Transverse colon (tissue), 4 donors: ENCODE measurements at regions of chr3 and their contacts with region 1.

Region 1: DNA sequence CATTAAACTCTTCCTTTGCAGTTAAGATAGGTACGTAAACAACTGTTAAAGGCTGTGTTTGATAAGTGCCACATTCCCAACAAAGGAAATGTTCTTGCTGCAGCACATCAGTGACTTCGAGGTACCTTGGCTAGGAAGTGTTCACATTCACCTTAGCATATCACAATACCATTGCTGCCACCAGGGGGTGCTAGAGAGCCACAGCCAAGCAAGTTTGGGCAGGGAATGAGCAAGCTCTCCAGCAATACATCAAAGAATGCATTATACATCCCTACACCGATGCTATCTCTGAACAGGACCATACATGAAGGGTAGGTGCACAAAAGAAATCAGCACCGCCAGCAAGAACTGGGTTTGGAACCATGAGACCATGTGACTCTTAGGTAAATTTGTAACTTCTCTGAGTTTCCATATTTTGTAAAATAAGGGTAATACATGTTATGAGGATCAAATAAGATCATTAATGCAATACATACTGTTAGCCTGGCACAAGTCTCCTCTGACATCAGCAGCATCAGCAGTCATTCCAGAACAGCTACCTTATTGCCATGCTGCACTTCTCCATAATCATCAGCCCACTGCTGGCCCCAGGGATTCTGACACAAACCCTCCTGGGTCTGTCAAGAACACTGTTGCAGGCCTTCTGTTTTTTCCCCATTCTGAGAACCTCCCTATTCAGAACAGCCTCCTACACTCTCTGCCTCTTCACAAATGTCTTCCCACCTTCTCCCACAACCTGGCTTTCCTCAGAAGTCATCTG is 37.6 kb downstream of the RYK start:
- DNase-seq: peak; percentile 87
- H3K4me3 ChIP-seq: no peak overlapping the region
- H3K27ac ChIP-seq: no peak overlapping the region
- H3K4me1 ChIP-seq: peaks cover 0 to 3% (median 0%) of the 10 kb centered on the region in 4 donors
- H3K27me3 ChIP-seq: no peaks in the 10 kb centered on the region
- CTCF ChIP-seq: peak; percentile 91 to 99 (median 98)
- EP300 ChIP-seq: no peak
- POLR2A ChIP-seq: no peak

Region 2: GRCh38 chr3:133610031-133610430 is 603.1 kb before region 1 on chr3:
- in situ Hi-C with region 1: no loop called
- intact Hi-C with region 1: no loop called
- DNase-seq: no peak
- H3K4me3 ChIP-seq: no peak overlapping the region
- H3K27ac ChIP-seq: no peak overlapping the region
- H3K4me1 ChIP-seq: no peaks in the 10 kb centered on the region
- H3K27me3 ChIP-seq: no peaks in the 10 kb centered on the region
- CTCF ChIP-seq: no peak
- EP300 ChIP-seq: no peak
- POLR2A ChIP-seq: no peak

Region 3: GRCh38 chr3:134056991-134057832 is 155.9 kb before region 1 on chr3:
- in situ Hi-C with region 1: no loop called
- intact Hi-C with region 1: no loop called
- DNase-seq: no peak
- H3K4me3 ChIP-seq: peak overlapping the region in 1 of 4 donors; percentile 3
- H3K27ac ChIP-seq: peak overlapping the region in 3 of 4 donors; percentile 41 to 72 (median 45)
- H3K4me1 ChIP-seq: peaks cover 0 to 43% (median 14%) of the 10 kb centered on the region in 4 donors
- H3K27me3 ChIP-seq: no peaks in the 10 kb centered on the region
- CTCF ChIP-seq: no peak
- EP300 ChIP-seq: no peak
- POLR2A ChIP-seq: peak; percentile 62

Region 4: GRCh38 chr3:134299185-134299887 is 86.2 kb after region 1 on chr3:
- in situ Hi-C with region 1: loop called in 2 of 4 experiments (anchors 10 kb)
- intact Hi-C with region 1: loop called (anchors 2 kb)
- DNase-seq: no peak
- H3K4me3 ChIP-seq: no peak overlapping the region
- H3K27ac ChIP-seq: peak overlapping the region in 1 of 4 donors; percentile 2
- H3K4me1 ChIP-seq: peaks cover 0 to 5% (median 0%) of the 10 kb centered on the region in 4 donors
- H3K27me3 ChIP-seq: no peaks in the 10 kb centered on the region
- CTCF ChIP-seq: peak in 4 of 5 experiments; percentile 22 to 44 (median 34)
- EP300 ChIP-seq: no peak
- POLR2A ChIP-seq: no peak

Region 5: GRCh38 chr3:134388788-134389485 is 175.9 kb after region 1 on chr3:
- in situ Hi-C with region 1: no loop called
- intact Hi-C with region 1: loop called (anchors 5 kb)
- DNase-seq: no peak
- H3K4me3 ChIP-seq: no peak overlapping the region
- H3K27ac ChIP-seq: no peak overlapping the region
- H3K4me1 ChIP-seq: peaks cover 0 to 8% (median 0%) of the 10 kb centered on the region in 4 donors
- H3K27me3 ChIP-seq: no peaks in the 10 kb centered on the region
- CTCF ChIP-seq: no peak
- EP300 ChIP-seq: no peak
- POLR2A ChIP-seq: no peak

Region 6: GRCh38 chr3:134473868-134474546 is 260.9 kb after region 1 on chr3:
- in situ Hi-C with region 1: loop called (anchors 5 to 25 kb)
- intact Hi-C with region 1: loop called (anchors 5 kb)
- DNase-seq: peak; percentile 77
- H3K4me3 ChIP-seq: no peak overlapping the region
- H3K27ac ChIP-seq: no peak overlapping the region
- H3K4me1 ChIP-seq: peaks cover 0 to 3% (median 0%) of the 10 kb centered on the region in 4 donors
- H3K27me3 ChIP-seq: no peaks in the 10 kb centered on the region
- CTCF ChIP-seq: peak; percentile 80 to 88 (median 82)
- EP300 ChIP-seq: no peak
- POLR2A ChIP-seq: no peak